ENCODE measurements at regions of chr11 and their contacts with region 1.

Region 1: GRCh38 chr11:75142714-75143419 is 8.0 kb upstream of the SLCO2B1 start:
- DNase-seq: peak; percentile 98
- H3K4me3 ChIP-seq: no peak overlapping the region
- H3K27ac ChIP-seq: peak overlapping the region; percentile 29
- H3K4me1 ChIP-seq: peaks cover 12% of the 10 kb centered on the region
- H3K27me3 ChIP-seq: no peaks in the 10 kb centered on the region
- CTCF ChIP-seq: no peak

Region 2: DNA sequence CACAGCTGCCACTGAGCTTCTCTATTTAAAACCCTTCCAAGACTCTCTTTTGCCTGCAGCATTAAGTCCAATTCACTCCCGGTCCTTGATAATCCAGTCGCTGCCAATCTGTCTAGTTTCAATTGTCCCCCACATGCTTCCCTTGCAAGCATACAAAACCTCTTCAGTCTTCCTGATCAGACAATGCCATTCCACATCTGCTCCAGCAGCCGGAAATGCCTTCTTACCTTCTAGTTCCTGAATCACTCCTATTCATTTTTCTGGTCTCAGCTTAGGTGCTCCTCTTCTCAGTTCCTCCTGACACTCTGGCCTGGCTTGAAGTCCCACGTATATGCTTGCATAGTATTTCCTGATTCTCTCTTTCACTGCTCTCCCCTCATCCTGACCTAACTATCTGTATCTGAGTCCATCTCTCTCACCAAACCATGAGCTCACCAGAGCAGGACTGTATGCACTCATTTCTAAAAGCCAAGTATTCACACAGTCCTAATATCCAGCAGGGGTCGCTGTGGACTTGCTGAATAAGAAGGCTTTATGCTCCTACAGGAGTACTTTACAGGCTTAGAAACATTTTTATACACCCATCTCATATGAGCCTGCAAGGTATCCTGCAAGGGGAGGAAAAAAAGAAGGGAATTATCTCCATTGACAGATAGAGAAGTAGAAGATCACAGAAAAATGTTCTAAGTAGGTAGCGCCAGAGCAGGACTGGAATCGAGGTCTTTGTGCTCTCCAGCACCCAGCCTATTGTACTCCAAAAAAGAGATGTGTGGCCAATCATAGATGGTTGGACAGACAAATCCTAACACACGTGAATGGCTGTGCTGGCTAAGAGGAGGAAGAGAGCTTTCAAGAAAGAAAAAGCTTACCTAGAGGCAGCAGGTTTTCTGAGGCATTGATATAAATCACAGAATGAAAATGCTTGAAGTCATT is 213.2 kb before region 1 on chr11:
- CTCF ChIA-PET with region 1: interaction called, 11 read pairs
- POLR2A ChIA-PET with region 1: no interaction called
- intact Hi-C with region 1: loop called (anchors 10 kb)
- DNase-seq: peak; percentile 94
- H3K4me3 ChIP-seq: no peak overlapping the region
- H3K27ac ChIP-seq: no peak overlapping the region
- H3K4me1 ChIP-seq: peaks cover 7% of the 10 kb centered on the region
- H3K27me3 ChIP-seq: no peaks in the 10 kb centered on the region
- CTCF ChIP-seq: peak; percentile 98

Region 3: GRCh38 chr11:75022759-75023396 is 120.0 kb before region 1 on chr11:
- CTCF ChIA-PET with region 1: interaction called, 5 read pairs
- POLR2A ChIA-PET with region 1: no interaction called
- intact Hi-C with region 1: loop called (anchors 5 kb)
- DNase-seq: peak; percentile 91
- H3K4me3 ChIP-seq: no peak overlapping the region
- H3K27ac ChIP-seq: no peak overlapping the region
- H3K4me1 ChIP-seq: no peaks in the 10 kb centered on the region
- H3K27me3 ChIP-seq: no peaks in the 10 kb centered on the region
- CTCF ChIP-seq: peak; percentile 98

Region 4: DNA sequence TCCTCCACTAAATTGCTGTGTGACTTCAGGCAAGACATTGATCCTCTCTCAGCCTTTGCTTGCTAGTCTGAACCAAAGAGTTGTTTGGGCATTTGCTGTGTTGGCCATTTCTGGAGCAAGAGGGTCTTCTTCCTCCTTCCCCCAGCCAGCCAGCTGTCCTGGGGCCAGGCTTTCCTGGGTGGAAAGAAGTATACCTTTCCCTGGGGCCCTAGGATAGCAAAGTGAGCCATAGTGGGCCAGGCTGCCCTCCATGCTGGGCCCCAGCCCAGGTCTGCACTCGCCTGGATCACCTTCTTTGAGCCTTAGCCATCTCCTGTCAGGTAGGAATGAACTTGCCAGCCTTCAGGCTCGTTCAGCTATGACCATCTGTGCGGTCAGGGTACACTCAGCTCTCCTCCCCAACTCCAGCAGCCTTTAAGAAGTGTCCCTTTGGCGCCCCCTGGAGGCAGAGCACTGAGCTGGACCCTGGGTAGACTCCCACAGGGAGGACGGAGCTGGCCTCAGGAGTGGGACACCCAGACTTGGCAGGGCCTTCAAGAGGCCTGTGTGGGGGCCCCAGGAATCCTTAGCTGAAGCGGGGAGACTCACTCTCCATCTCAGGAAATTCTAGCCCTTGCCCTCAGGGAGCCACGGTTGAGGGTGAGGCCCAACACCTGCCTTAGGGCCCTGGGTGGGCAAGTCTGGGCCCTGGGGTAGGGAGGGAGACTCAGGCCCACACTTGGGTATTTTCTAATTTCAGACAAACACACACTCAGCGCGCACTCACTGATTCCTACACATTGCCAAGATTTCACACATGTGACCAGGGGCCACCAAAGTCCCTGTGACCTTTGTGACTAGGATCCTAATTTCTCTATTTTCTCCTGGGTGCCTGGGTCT is 62.1 kb after region 1 on chr11:
- CTCF ChIA-PET with region 1: interaction called, 178 read pairs
- POLR2A ChIA-PET with region 1: no interaction called
- intact Hi-C with region 1: loop called (anchors 1 kb)
- DNase-seq: peak; percentile 87
- H3K4me3 ChIP-seq: no peak overlapping the region
- H3K27ac ChIP-seq: no peak overlapping the region
- H3K4me1 ChIP-seq: no peaks in the 10 kb centered on the region
- H3K27me3 ChIP-seq: peaks cover 24% of the 10 kb centered on the region
- CTCF ChIP-seq: peak; percentile 99

Region 5: DNA sequence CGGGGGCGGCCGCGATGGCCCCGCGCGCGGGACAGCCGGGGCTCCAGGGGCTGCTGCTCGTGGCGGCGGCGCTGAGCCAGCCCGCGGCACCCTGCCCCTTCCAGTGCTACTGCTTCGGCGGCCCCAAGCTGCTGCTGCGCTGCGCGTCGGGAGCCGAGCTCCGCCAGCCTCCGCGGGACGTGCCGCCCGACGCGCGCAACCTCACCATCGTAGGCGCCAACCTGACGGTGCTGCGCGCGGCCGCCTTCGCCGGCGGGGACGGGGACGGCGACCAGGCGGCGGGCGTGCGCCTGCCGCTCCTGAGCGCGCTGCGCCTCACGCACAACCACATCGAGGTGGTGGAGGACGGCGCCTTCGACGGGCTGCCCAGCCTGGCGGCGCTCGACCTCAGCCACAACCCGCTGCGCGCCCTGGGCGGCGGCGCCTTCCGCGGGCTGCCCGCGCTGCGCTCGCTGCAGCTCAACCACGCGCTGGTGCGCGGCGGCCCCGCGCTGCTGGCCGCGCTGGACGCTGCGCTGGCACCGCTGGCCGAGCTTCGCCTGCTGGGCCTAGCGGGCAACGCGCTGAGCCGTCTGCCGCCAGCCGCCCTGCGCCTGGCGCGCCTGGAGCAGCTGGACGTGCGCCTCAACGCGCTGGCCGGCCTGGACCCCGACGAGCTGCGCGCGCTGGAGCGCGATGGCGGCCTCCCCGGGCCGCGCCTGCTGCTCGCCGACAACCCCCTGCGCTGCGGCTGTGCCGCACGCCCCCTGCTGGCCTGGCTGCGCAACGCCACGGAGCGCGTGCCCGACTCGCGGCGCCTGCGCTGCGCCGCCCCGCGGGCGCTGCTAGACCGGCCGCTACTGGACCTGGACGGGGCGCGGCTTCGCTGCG is 98.4 kb after region 1 on chr11:
- CTCF ChIA-PET with region 1: interaction called, 19 read pairs
- POLR2A ChIA-PET with region 1: no interaction called
- intact Hi-C with region 1: loop called (anchors 2 kb)
- DNase-seq: peak; percentile 92
- H3K4me3 ChIP-seq: peak overlapping the region; percentile 49
- H3K27ac ChIP-seq: no peak overlapping the region
- H3K4me1 ChIP-seq: no peaks in the 10 kb centered on the region
- H3K27me3 ChIP-seq: peaks cover 43% of the 10 kb centered on the region
- CTCF ChIP-seq: peak; percentile 65

Region 6: DNA sequence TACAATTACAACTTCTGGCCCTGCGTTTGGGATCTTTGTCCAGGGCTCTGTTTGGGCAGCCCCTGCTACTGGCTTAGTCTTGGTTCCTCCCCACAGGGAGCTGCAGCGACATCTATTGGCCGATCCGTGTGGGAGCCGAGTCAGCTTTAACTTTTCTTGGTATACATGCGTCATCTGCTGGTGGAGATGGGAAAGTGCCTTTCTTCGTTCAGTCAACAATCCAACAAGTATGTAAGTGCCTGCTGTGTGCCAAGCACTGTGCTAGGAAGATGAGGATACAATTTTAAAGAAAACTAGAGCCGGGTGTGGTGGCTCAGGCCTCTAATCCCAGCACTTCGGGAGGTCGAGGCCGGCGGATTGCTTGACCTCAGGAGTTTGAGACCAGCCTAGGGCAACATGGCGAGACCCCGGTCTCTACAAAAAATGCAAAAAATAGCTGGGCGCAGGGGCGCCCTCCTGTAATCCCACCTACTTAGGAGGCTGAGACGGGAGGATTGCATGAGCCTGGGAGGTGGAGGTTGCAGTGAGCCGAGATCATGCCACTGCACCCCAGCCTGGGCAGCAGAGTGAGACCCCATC is 105.9 kb after region 1 on chr11:
- CTCF ChIA-PET with region 1: interaction called, 65 read pairs
- POLR2A ChIA-PET with region 1: no interaction called
- intact Hi-C with region 1: loop called (anchors 1 kb)
- DNase-seq: peak; percentile 95
- H3K4me3 ChIP-seq: no peak overlapping the region
- H3K27ac ChIP-seq: no peak overlapping the region
- H3K4me1 ChIP-seq: no peaks in the 10 kb centered on the region
- H3K27me3 ChIP-seq: peaks cover 18% of the 10 kb centered on the region
- CTCF ChIP-seq: peak; percentile 100

Measured in A673 (cell line).